Activated B cell treated with CpG ODN at 0.5 μM for 24 hours (primary cell): ENCODE measurements at regions of chr3 and their contacts with region 1.

Region 1: GRCh38 chr3:169662132-169662842 is 1.2 kb downstream of the MECOM start:
- DNase-seq: peak; percentile 46
- ATAC-seq: peak; percentile 72
- H3K4me3 Mint-ChIP-seq: peak overlapping the region; percentile 87
- H3K27ac Mint-ChIP-seq: no peak overlapping the region
- H3K4me1 Mint-ChIP-seq: peaks cover 58% of the 10 kb centered on the region
- H3K27me3 Mint-ChIP-seq: peaks cover 72% of the 10 kb centered on the region
- CTCF ChIP-seq: no peak

Region 2: GRCh38 chr3:169562992-169563774 is 99.1 kb before region 1 on chr3:
- CTCF ChIA-PET with region 1: no interaction called
- POLR2A ChIA-PET with region 1: no interaction called
- intact Hi-C with region 1: loop called (anchors 1 kb)
- DNase-seq: no peak
- ATAC-seq: peak; percentile 49
- H3K4me3 Mint-ChIP-seq: no peak overlapping the region
- H3K27ac Mint-ChIP-seq: no peak overlapping the region
- H3K4me1 Mint-ChIP-seq: no peaks in the 10 kb centered on the region
- H3K27me3 Mint-ChIP-seq: no peaks in the 10 kb centered on the region
- CTCF ChIP-seq: no peak

Region 3: DNA sequence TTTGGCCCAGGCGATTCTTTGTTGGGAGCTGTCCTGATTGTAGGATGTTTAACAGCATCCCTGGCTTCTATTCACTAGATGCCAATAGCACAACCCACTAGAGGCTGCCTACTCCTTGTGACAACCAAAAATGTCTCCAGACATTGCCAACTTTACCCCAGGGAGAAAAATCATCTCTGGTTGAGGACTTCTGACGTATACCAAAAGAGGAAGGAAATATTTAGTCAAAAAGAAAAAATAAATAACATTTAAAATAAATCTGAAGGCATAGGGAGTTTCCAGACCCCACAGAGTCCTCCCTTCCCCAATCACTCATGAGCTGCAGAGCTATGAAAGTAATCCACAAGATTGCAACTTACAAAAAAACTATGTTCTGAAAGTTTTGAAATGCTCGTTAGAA is 59.8 kb before region 1 on chr3:
- CTCF ChIA-PET with region 1: no interaction called
- POLR2A ChIA-PET with region 1: no interaction called
- intact Hi-C with region 1: loop called (anchors 2 kb)
- DNase-seq: no peak
- ATAC-seq: peak; percentile 88
- H3K4me3 Mint-ChIP-seq: no peak overlapping the region
- H3K27ac Mint-ChIP-seq: peak overlapping the region; percentile 14
- H3K4me1 Mint-ChIP-seq: peaks cover 30% of the 10 kb centered on the region
- H3K27me3 Mint-ChIP-seq: no peaks in the 10 kb centered on the region
- CTCF ChIP-seq: no peak

Region 4: GRCh38 chr3:169744366-169745054 is 82.2 kb after region 1 on chr3:
- CTCF ChIA-PET with region 1: no interaction called
- POLR2A ChIA-PET with region 1: no interaction called
- intact Hi-C with region 1: loop called (anchors 5 kb)
- DNase-seq: no peak
- ATAC-seq: no peak
- H3K4me3 Mint-ChIP-seq: no peak overlapping the region
- H3K27ac Mint-ChIP-seq: no peak overlapping the region
- H3K4me1 Mint-ChIP-seq: no peaks in the 10 kb centered on the region
- H3K27me3 Mint-ChIP-seq: peaks cover 17% of the 10 kb centered on the region
- CTCF ChIP-seq: no peak

Region 5: GRCh38 chr3:170869645-170870593 is 1207.6 kb after region 1 on chr3 and contains the start of gene RPL22L1:
- CTCF ChIA-PET with region 1: no interaction called
- POLR2A ChIA-PET with region 1: no interaction called
- intact Hi-C with region 1: loop called (anchors 2 kb)
- DNase-seq: peak; percentile 89
- ATAC-seq: peak; percentile 86
- H3K4me3 Mint-ChIP-seq: peak within 1 kb of the TSS; percentile 95
- H3K27ac Mint-ChIP-seq: peak within 1 kb of the TSS; percentile 97
- H3K4me1 Mint-ChIP-seq: peaks cover 34% of the 10 kb centered on the region
- H3K27me3 Mint-ChIP-seq: no peaks in the 10 kb centered on the region
- CTCF ChIP-seq: no peak
- total RNA-seq, gene RPL22L1: 109 and 124 TPM in 2 replicates